Posterior cingulate gyrus (tissue), 11 donors: ENCODE measurements at regions of chr12 and their contacts with region 1.

Region 1: DNA sequence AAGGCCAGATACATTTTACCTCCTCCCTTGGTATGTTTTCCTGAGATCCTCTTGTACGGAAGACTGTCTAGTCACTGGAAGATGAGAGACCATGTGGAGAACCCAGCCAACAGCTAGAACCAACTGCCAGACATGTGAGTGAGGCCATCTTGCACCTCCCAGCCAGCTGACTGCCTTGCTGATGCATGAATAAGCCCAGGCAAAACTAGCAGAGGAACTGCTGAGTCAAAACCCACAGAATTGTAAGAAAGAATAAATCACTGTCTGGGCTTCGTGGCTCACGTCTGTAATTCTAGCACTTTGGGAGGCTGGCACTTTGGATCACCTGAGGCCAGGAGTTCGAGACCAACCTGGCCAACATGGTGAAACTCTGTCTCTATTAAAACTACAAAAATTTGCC is 160.0 kb downstream of the TPH2 start:
- DNase-seq: no peak

Region 2: GRCh38 chr12:72133497-72134055 is 35.0 kb after region 1 on chr12:
- intact Hi-C with region 1: loop called (anchors 2 kb)
- DNase-seq: peak in 4 of 10 donors; percentile 15 to 87 (median 22)